ENCODE measurements at regions of chrX and their contacts with region 1.

Region 1: GRCh38 chrX:49922291-49923241 is at the start of gene CLCN5:
- DNase-seq: peak; percentile 97
- H3K4me3 ChIP-seq: peak within 1 kb of the TSS; percentile 53 to 87 (median 79)
- H3K27ac ChIP-seq: peak within 1 kb of the TSS; percentile 45
- H3K4me1 ChIP-seq: peaks cover 3% of the 10 kb centered on the region
- H3K27me3 ChIP-seq: no peaks in the 10 kb centered on the region
- CTCF ChIP-seq: no peak
- POLR2A ChIP-seq: peak; percentile 43
- total RNA-seq, gene CLCN5: 12.9 TPM in 2 replicates

Region 2: GRCh38 chrX:49878834-49879659 is 43.5 kb before region 1 on chrX and contains the start of gene USP27X:
- CTCF ChIA-PET with region 1: interaction called, 27 read pairs
- POLR2A ChIA-PET with region 1: no interaction called
- dilution Hi-C with region 1: no loop called
- intact Hi-C with region 1: loop called (anchors 2 kb)
- DNase-seq: peak; percentile 77
- H3K4me3 ChIP-seq: peak within 1 kb of the TSS; percentile 62 to 75 (median 75)
- H3K27ac ChIP-seq: peak within 1 kb of the TSS; percentile 24
- H3K4me1 ChIP-seq: peaks cover 5% of the 10 kb centered on the region
- H3K27me3 ChIP-seq: no peaks in the 10 kb centered on the region
- CTCF ChIP-seq: peak; percentile 48 to 56
- POLR2A ChIP-seq: no peak
- total RNA-seq, gene USP27X: 2.3 and 3.0 TPM in 2 replicates

Region 3: DNA sequence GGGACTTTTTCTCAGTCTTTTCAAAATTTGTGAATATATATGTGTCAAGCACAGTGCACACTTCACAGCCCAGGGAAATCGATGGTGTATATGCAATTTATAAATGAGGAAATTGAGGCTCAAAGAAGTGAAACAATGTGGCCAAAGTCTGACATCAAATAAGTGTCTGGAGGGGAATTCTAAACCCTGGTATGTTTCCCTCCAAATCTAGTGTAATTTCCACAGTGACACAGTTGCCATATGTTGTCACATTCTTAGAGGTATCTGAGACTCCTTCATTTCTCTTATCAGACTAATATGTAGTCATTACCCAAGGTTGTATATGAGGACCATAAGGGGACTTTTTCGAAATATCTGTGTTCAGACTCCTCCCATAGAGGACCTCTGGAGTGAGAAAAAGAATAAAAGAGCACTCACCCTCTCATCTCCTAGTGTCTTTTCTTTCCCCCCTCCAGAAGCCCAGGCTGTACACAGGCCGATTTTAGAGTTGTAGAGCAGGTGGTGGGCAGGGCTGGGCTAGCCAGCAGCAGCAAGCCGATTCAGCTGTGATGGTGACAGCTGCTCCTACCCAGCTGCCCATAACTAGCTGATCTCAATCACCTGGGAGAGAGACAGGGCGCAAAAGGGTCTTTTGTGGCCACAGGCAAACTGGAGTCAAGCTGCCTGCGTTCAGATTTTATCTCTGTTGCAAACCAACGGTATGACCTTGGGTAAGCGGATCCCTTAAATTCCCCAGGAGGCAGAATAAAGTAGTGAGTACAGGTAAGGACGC is 54.9 kb after region 1 on chrX:
- CTCF ChIA-PET with region 1: no interaction called
- POLR2A ChIA-PET with region 1: no interaction called
- dilution Hi-C with region 1: no loop called
- intact Hi-C with region 1: loop called (anchors 5 kb)
- DNase-seq: no peak
- H3K4me3 ChIP-seq: no peak overlapping the region
- H3K27ac ChIP-seq: peak overlapping the region; percentile 37
- H3K4me1 ChIP-seq: peaks cover 11% of the 10 kb centered on the region
- H3K27me3 ChIP-seq: no peaks in the 10 kb centered on the region
- CTCF ChIP-seq: no peak
- POLR2A ChIP-seq: no peak

Region 4: GRCh38 chrX:50081282-50081889 is 158.8 kb after region 1 on chrX:
- CTCF ChIA-PET with region 1: interaction called, 7 read pairs
- POLR2A ChIA-PET with region 1: no interaction called
- dilution Hi-C with region 1: no loop called
- intact Hi-C with region 1: loop called (anchors 2 kb)
- DNase-seq: peak; percentile 34
- H3K4me3 ChIP-seq: no peak overlapping the region
- H3K27ac ChIP-seq: no peak overlapping the region
- H3K4me1 ChIP-seq: no peaks in the 10 kb centered on the region
- H3K27me3 ChIP-seq: no peaks in the 10 kb centered on the region
- CTCF ChIP-seq: peak; percentile 15 to 53
- POLR2A ChIP-seq: no peak

Region 5: DNA sequence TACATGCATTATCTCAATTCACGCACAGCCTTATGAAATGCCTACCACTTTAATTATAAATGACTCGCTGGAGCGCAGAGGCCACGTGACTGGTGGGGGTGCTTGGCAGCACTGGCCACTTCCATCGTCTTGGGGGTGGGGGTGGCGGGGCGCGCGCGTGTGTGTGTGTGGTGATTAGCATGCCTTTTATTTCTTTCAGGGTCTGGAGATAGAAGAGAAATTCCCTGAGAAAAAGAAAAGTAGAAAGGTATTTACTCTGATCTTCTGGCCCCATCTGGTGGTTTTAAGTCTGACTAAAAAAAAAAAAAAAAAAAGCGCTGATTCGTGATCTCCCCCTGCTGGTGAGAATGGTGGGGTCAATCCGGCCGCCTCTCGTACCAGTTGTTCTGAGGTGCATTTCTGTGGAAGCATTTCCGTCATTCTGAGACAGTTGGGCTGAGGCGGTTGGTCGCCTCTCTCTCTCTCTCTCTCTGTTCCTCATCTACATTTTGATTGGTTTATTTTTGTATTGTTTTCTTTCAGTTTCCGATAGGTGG is 281.9 kb after region 1 on chrX and contains the start of gene CCNB3:
- CTCF ChIA-PET with region 1: interaction called, 8 read pairs
- POLR2A ChIA-PET with region 1: no interaction called
- dilution Hi-C with region 1: no loop called
- intact Hi-C with region 1: loop called (anchors 1 kb)
- DNase-seq: peak; percentile 75
- H3K4me3 ChIP-seq: no peak within 1 kb of the TSS
- H3K27ac ChIP-seq: peak within 1 kb of the TSS; percentile 24
- H3K4me1 ChIP-seq: peaks cover 24% of the 10 kb centered on the region
- H3K27me3 ChIP-seq: no peaks in the 10 kb centered on the region
- CTCF ChIP-seq: peak; percentile 55 to 57
- POLR2A ChIP-seq: no peak
- total RNA-seq, gene CCNB3: 0.32 and 0.77 TPM in 2 replicates

Measured in endothelial cell of umbilical vein (primary cell).